Dendritic cell treated with granulocyte-macrophage colony-stimulating factor and Interleukin-4, amounts not matched to agents 40 ng/mL and 50 ng/mL, for 4 days (primary cell): ENCODE measurements at regions of chr1 and their contacts with region 1.

Region 1: DNA sequence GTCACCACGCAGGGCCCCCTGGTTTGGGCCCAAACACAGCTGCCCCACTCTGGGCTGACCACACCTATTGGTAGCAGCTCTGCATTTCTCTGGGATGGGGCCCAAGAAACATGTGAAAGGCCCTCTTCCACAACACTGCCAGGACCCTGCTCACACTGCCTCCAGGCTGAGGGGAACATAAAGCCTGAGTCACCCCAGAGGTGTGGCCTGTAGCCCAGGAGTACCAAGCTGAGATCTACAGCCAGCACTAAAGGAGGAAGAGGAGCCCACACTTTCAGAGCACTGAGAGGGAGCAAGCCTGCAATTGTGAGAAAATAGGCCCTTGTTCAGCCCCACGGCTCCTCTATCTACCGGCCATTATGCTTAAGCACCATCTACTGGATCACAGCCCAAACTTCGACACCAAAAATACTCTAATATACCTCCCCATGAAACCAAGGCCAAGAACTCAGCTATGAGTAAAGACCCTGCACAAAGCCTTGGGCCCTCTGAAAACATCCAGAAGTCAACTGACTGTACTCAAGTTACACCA is 14.4 kb upstream of the OR2T10 start:
- H3K4me3 Mint-ChIP-seq: no peak overlapping the region
- H3K27ac Mint-ChIP-seq: no peak overlapping the region
- H3K4me1 Mint-ChIP-seq: peaks cover 7% of the 10 kb centered on the region
- H3K27me3 Mint-ChIP-seq: no peaks in the 10 kb centered on the region

Region 2: GRCh38 chr1:248404024-248404423 is 207.9 kb before region 1 on chr1:
- intact Hi-C with region 1: loop called (anchors 5 kb)
- H3K4me3 Mint-ChIP-seq: no peak overlapping the region
- H3K27ac Mint-ChIP-seq: no peak overlapping the region
- H3K4me1 Mint-ChIP-seq: no peaks in the 10 kb centered on the region
- H3K27me3 Mint-ChIP-seq: no peaks in the 10 kb centered on the region